MCF 10A (cell line): ENCODE measurements at regions of chr13 and their contacts with region 1.

Region 1: GRCh38 chr13:51625555-51626345 is 41.5 kb downstream of the WDFY2 start:
- DNase-seq: peak; percentile 83
- H3K4me3 Mint-ChIP-seq: no peak overlapping the region
- H3K27ac Mint-ChIP-seq: peak overlapping the region; percentile 63
- H3K4me1 Mint-ChIP-seq: peaks cover 54% of the 10 kb centered on the region
- H3K27me3 Mint-ChIP-seq: no peaks in the 10 kb centered on the region
- CTCF ChIP-seq: no peak

Region 2: DNA sequence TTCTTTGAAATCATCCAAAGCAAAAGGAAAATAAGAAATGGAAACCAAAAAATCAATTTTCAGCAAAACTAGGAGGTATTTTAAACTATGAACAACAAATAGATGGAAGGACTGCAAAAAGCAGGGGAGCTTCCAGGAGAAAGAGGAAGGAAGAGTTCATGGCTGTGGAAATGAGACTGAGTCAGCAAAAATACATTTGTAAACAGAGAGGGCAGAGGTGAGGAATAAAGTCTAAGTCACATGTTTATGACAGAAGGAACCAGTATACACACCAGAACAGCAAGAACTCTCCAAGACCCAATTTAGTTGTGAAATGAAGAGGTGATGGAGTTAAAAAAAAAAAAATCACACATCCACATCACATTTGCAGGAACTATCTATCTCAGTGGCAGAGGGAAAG is 646.6 kb before region 1 on chr13:
- CTCF ChIA-PET with region 1: no interaction called
- POLR2A ChIA-PET with region 1: no interaction called
- intact Hi-C with region 1: no loop called
- DNase-seq: no peak
- H3K4me3 Mint-ChIP-seq: no peak overlapping the region
- H3K27ac Mint-ChIP-seq: no peak overlapping the region
- H3K4me1 Mint-ChIP-seq: no peaks in the 10 kb centered on the region
- H3K27me3 Mint-ChIP-seq: no peaks in the 10 kb centered on the region
- CTCF ChIP-seq: no peak

Region 3: GRCh38 chr13:51523082-51523518 is 102.7 kb before region 1 on chr13:
- CTCF ChIA-PET with region 1: interaction called, 3 read pairs
- POLR2A ChIA-PET with region 1: interaction called, 4 read pairs
- intact Hi-C with region 1: loop called (anchors 5 kb)
- DNase-seq: peak; percentile 96
- H3K4me3 Mint-ChIP-seq: peak overlapping the region; percentile 25
- H3K27ac Mint-ChIP-seq: no peak overlapping the region
- H3K4me1 Mint-ChIP-seq: peaks cover 25% of the 10 kb centered on the region
- H3K27me3 Mint-ChIP-seq: no peaks in the 10 kb centered on the region
- CTCF ChIP-seq: no peak

Region 4: GRCh38 chr13:51590971-51591627 is 34.7 kb before region 1 on chr13:
- CTCF ChIA-PET with region 1: interaction called, 6 read pairs
- POLR2A ChIA-PET with region 1: interaction called, 31 read pairs
- intact Hi-C with region 1: no loop called
- DNase-seq: peak; percentile 91
- H3K4me3 Mint-ChIP-seq: peak overlapping the region; percentile 61
- H3K27ac Mint-ChIP-seq: peak overlapping the region; percentile 77
- H3K4me1 Mint-ChIP-seq: peaks cover 59% of the 10 kb centered on the region
- H3K27me3 Mint-ChIP-seq: no peaks in the 10 kb centered on the region
- CTCF ChIP-seq: no peak

Region 5: GRCh38 chr13:51605698-51606097 is 20.1 kb before region 1 on chr13:
- CTCF ChIA-PET with region 1: no interaction called
- POLR2A ChIA-PET with region 1: interaction called, 12 read pairs
- intact Hi-C with region 1: no loop called
- DNase-seq: no peak
- H3K4me3 Mint-ChIP-seq: no peak overlapping the region
- H3K27ac Mint-ChIP-seq: no peak overlapping the region
- H3K4me1 Mint-ChIP-seq: peaks cover 37% of the 10 kb centered on the region
- H3K27me3 Mint-ChIP-seq: no peaks in the 10 kb centered on the region
- CTCF ChIP-seq: no peak

Region 6: GRCh38 chr13:51697181-51697580 is 71.4 kb after region 1 on chr13:
- CTCF ChIA-PET with region 1: no interaction called
- POLR2A ChIA-PET with region 1: interaction called, 14 read pairs
- intact Hi-C with region 1: no loop called
- DNase-seq: peak; percentile 51
- H3K4me3 Mint-ChIP-seq: no peak overlapping the region
- H3K27ac Mint-ChIP-seq: peak overlapping the region; percentile 69
- H3K4me1 Mint-ChIP-seq: peaks cover 18% of the 10 kb centered on the region
- H3K27me3 Mint-ChIP-seq: no peaks in the 10 kb centered on the region
- CTCF ChIP-seq: no peak

Region 7: DNA sequence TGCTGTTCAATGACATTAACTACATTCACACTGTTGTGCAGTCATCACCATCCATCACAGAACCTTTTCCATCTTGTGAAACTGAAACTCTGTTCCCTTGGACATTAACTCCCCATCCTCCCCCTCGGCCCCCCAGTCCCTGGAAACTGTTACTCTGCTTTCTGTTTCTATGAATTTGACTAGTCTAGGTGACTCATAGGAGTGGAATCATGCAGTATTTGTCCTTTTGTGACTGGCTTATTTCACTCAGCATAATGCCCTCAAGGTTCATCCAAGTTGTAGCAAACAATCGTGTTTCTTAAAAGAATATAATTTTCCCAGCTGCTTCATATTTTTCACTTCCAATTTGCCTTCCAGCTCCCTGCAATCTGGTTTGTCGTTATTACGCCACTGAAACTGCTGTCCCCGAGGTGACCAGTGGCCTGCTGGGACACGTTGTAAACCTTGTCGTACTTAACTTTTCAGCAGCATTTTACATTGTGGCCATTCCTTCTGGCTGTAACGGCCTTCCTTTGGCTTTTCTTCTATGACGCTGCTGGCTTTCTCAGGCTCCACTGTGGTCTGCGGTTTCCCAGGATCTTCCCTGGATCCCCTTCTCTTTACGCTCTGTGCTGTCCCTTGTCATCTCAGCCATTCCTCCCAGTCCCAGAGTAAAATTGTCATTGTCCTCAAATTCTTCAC is 104.3 kb after region 1 on chr13:
- CTCF ChIA-PET with region 1: interaction called, 7 read pairs
- POLR2A ChIA-PET with region 1: interaction called, 8 read pairs
- intact Hi-C with region 1: loop called (anchors 5 kb)
- DNase-seq: peak; percentile 75
- H3K4me3 Mint-ChIP-seq: no peak overlapping the region
- H3K27ac Mint-ChIP-seq: no peak overlapping the region
- H3K4me1 Mint-ChIP-seq: peaks cover 23% of the 10 kb centered on the region
- H3K27me3 Mint-ChIP-seq: no peaks in the 10 kb centered on the region
- CTCF ChIP-seq: no peak